ENCODE measurements at regions of chr9 and their contacts with region 1.

Region 1: DNA sequence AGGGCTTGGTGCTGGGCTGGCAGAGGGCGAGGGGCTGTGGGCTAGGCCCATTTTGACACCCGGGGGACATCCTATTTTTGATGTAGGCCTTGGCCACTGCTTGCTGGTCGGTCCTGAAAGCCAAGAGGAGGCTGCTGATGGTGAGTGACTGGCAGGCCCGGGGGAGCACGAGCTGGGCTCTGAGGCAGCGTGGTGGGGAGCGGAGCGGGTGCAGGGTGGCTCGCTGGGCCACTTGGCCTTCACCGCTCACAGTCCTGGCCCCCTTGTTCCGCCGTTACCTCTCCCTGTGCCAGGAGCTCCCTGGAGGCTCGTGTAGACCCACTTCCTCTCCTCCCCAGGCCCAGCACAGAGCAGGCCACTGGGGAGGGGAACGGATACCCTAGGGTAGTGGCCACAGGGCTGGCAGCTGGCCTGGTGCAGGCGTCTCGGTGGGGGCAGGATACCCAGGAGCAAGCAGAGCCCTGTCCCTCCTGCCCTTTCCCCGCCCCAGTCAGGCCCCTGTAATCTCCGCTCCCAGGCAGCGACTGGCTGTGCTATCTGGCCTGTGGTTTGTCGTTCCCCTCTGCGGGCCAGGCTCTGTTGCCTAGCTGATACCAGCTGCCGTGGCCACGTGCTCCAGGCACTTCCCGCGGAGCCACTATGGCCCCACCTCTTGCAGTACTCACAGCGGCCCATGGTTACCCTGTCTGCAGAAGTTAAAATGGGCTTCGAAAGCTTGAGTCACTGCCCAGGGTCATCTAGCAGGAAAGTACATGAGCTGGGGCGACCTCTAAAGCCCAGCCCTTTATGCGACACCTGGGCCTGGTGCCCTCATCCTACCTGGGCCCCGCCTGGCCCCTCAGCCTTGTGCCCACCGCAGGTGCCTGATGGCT is 11.7 kb upstream of the DOLPP1 start:
- DNase-seq: no peak
- H3K27ac ChIP-seq: peak overlapping the region; percentile 21
- CTCF ChIP-seq: no peak

Region 2: DNA sequence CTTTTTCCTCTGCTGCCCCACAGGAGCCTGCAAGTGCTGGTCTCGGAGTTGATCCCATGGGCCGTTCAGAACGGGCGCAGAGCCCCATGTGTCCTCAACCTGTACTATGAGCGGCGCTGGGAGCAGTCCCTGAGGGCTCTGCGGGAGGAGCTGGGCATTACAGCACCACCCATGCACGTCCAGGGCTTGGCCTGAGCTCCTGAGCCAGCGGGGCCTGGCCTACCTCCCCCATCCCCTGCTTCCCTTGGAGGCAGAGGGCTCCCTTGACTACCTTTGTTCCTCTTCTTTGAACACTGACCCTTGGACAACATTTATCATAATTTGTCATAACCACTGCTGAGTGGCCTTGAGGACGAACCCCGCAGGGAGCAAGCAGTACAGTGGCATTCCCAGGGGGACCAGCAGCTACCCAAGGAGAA is 735.8 kb before region 1 on chr9:
- CTCF ChIA-PET with region 1: no interaction called
- POLR2A ChIA-PET with region 1: interaction called, 10 read pairs
- DNase-seq: no peak
- H3K27ac ChIP-seq: peak overlapping the region; percentile 36
- CTCF ChIP-seq: no peak

Region 3: GRCh38 chr9:129089246-129089645 is 20.0 kb after region 1 on chr9:
- CTCF ChIA-PET with region 1: no interaction called
- POLR2A ChIA-PET with region 1: no interaction called
- DNase-seq: no peak
- H3K27ac ChIP-seq: peak overlapping the region; percentile 18
- CTCF ChIP-seq: no peak

Measured in RWPE1 (cell line).